H1 (cell line): ENCODE measurements at regions of chr3 and their contacts with region 1.

Region 1: GRCh38 chr3:114418724-114419543 is 125.1 kb downstream of the TIGIT start:
- DNase-seq: no peak
- H3K4me3 ChIP-seq: no peak overlapping the region
- H3K27ac ChIP-seq: no peak overlapping the region
- H3K4me1 ChIP-seq: peaks cover 0 to 4% (median 0%) of the 10 kb centered on the region in 4 experiments; a peak in 1 of 7 replicates
- H3K27me3 ChIP-seq: no peaks in the 10 kb centered on the region
- CTCF ChIP-seq: peak in 2 of 3 experiments; percentile 53 to 68; a peak in 2 of 4 replicates
- EP300 ChIP-seq: no peak
- POLR2A ChIP-seq: no peak
- RAD21 ChIP-seq: peak; percentile 70 to 79

Region 2: DNA sequence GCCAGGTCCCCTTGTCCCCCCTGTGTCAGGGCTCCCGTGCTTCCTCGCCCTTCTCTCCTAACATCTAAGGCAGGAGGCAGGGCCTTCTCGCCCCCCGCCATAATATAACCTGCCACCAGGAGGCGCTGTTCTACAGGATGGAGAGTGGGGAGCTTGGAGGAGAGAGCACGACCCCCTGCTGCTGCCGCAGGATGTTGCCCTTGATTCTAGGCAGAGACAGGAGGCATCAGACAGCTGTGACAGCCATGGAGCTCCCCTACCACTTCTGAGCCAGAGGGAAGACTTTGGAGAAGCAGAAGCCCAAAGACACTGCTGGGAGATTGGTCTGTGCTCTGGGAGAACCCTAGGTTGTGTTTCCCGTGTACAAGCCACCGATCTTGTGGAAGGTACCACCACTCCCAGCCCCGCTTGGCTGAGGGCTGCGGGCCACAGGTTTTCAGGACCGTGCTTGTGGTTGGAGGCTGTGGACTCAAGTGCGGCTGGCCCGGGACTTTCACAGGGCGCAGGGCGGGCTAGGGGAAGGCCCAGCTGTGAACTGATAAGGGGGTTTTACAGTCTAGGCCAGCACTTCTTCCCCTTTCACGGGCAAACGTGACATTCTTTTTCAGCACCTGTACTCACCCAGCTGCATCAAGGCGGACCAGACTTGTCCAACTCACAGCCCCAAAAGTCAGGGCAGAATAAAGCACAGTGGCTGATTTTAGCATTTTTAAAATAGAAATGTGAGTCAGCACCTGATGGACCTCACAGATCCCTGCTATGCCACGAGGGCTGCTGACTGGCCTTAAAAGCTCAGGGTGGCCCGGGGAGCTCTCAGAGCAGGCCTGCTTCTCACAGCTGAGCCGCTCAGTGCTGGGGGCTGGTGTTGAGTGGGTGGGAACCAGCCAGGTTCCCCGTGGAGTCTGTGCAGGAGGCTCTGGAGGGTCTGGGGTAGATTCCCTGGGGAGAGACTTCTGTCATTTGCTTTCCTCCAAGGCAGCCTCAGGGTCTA is 127.7 kb before region 1 on chr3:
- CTCF ChIA-PET with region 1: interaction called, 11 read pairs
- POLR2A ChIA-PET with region 1: no interaction called
- DNase-seq: peak; percentile 88 to 100
- H3K4me3 ChIP-seq: no peak overlapping the region
- H3K27ac ChIP-seq: no peak overlapping the region
- H3K4me1 ChIP-seq: peaks cover 0 to 4% (median 2%) of the 10 kb centered on the region in 4 experiments; a peak in 2 of 7 replicates
- H3K27me3 ChIP-seq: no peaks in the 10 kb centered on the region
- CTCF ChIP-seq: peak; percentile 92 to 97 (median 96)
- EP300 ChIP-seq: no peak
- POLR2A ChIP-seq: no peak
- RAD21 ChIP-seq: peak; percentile 92 to 96

Region 3: GRCh38 chr3:114299421-114299820 is 119.5 kb before region 1 on chr3:
- CTCF ChIA-PET with region 1: interaction called, 10 read pairs
- POLR2A ChIA-PET with region 1: no interaction called
- DNase-seq: no peak
- H3K4me3 ChIP-seq: no peak overlapping the region
- H3K27ac ChIP-seq: no peak overlapping the region
- H3K4me1 ChIP-seq: no peaks in the 10 kb centered on the region
- H3K27me3 ChIP-seq: no peaks in the 10 kb centered on the region
- CTCF ChIP-seq: peak; percentile 40 to 59 (median 40)
- EP300 ChIP-seq: no peak
- POLR2A ChIP-seq: no peak
- RAD21 ChIP-seq: peak in 1 of 2 experiments; percentile 37; a peak in 3 of 4 replicates

Region 4: DNA sequence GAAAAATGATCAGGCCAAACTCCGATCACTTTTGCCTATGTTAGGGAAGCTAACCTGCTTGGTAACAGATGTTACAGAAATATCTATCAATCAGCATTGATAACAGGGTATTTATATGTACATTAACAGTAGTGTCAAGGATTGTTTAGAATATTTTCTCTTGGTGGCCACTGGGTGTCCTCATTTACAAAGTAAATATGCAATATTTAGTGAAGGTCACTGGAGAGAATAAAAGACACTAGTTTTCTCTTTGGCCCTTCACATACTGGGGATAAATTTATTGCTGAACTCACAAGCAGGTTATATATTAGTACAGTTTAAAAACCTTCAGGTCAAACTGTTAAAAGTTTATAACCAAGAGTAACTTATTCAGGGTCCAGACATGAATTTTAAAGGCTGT is 56.1 kb before region 1 on chr3:
- CTCF ChIA-PET with region 1: interaction called, 12 read pairs
- POLR2A ChIA-PET with region 1: no interaction called
- DNase-seq: no peak
- H3K4me3 ChIP-seq: no peak overlapping the region
- H3K27ac ChIP-seq: no peak overlapping the region
- H3K4me1 ChIP-seq: peaks cover 0 to 5% (median 0%) of the 10 kb centered on the region in 4 experiments; a peak in 1 of 7 replicates
- H3K27me3 ChIP-seq: no peaks in the 10 kb centered on the region
- CTCF ChIP-seq: peak in 1 of 3 experiments; percentile 30; a peak in 2 of 4 replicates
- EP300 ChIP-seq: no peak
- POLR2A ChIP-seq: no peak
- RAD21 ChIP-seq: peak in 1 of 2 experiments; percentile 32; a peak in 2 of 4 replicates

Region 5: DNA sequence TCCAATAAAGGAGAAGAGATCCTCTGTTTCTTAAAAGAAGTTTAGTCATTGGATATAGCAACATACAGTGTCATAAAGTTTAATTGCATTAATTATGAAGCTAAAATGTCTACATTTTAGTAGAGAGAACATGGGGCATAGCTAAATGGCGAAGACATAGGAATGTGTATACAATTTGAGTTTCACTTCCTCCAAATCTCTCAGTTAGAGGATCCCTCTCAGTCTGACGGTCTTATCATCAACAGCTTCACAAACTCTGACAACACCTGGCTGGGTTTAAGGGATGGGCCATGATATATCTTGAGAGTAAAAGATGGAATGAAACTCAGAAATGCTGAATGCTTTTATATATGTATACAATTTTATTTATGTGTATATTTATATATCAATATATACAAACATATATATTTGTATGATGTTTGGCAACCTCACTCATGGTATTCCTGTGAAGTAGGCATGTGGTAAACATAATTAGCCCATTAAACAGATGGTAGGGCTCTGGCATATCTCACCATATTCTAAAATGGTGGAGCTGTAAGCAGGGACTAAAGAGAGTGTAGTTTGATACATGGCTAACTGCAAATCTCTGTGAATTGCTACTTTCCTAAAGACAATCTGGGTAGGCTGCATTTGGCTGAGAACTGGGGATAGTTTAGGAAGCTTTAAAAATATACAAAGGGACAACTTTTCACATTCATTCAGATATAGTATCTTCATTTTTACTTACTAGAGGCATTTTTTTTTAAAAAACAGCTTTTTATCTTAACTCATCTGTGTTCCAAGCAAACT is 13.5 kb before region 1 on chr3:
- CTCF ChIA-PET with region 1: interaction called, 28 read pairs
- POLR2A ChIA-PET with region 1: no interaction called
- DNase-seq: no peak
- H3K4me3 ChIP-seq: no peak overlapping the region
- H3K27ac ChIP-seq: no peak overlapping the region
- H3K4me1 ChIP-seq: peaks cover 1 to 12% (median 3%) of the 10 kb centered on the region in 4 experiments; a peak in 5 of 7 replicates
- H3K27me3 ChIP-seq: no peaks in the 10 kb centered on the region
- CTCF ChIP-seq: no peak
- EP300 ChIP-seq: no peak
- POLR2A ChIP-seq: no peak
- RAD21 ChIP-seq: no peak

Region 6: GRCh38 chr3:114435386-114436115 is 16.6 kb after region 1 on chr3:
- CTCF ChIA-PET with region 1: interaction called, 38 read pairs
- POLR2A ChIA-PET with region 1: no interaction called
- DNase-seq: no peak
- H3K4me3 ChIP-seq: no peak overlapping the region
- H3K27ac ChIP-seq: no peak overlapping the region
- H3K4me1 ChIP-seq: no peaks in the 10 kb centered on the region
- H3K27me3 ChIP-seq: no peaks in the 10 kb centered on the region
- CTCF ChIP-seq: no peak
- EP300 ChIP-seq: no peak
- POLR2A ChIP-seq: no peak
- RAD21 ChIP-seq: no peak

Region 7: GRCh38 chr3:114542359-114542758 is 123.4 kb after region 1 on chr3:
- CTCF ChIA-PET with region 1: no interaction called
- POLR2A ChIA-PET with region 1: no interaction called
- DNase-seq: peak in 1 of 2 experiments; percentile 19
- H3K4me3 ChIP-seq: peak overlapping the region in 1 of 4 experiments; percentile 27; a peak in 1 of 8 replicates
- H3K27ac ChIP-seq: peak overlapping the region; percentile 5; the same call in 1 of the 2 replicates
- H3K4me1 ChIP-seq: peaks cover 0 to 20% (median 0%) of the 10 kb centered on the region in 4 experiments; a peak in 1 of 7 replicates
- H3K27me3 ChIP-seq: no peaks in the 10 kb centered on the region
- CTCF ChIP-seq: no peak
- EP300 ChIP-seq: no peak
- POLR2A ChIP-seq: no peak
- RAD21 ChIP-seq: no peak